Heart left ventricle (tissue), 16 donors: ENCODE measurements at regions of chr1 and their contacts with region 1.

Region 1: DNA sequence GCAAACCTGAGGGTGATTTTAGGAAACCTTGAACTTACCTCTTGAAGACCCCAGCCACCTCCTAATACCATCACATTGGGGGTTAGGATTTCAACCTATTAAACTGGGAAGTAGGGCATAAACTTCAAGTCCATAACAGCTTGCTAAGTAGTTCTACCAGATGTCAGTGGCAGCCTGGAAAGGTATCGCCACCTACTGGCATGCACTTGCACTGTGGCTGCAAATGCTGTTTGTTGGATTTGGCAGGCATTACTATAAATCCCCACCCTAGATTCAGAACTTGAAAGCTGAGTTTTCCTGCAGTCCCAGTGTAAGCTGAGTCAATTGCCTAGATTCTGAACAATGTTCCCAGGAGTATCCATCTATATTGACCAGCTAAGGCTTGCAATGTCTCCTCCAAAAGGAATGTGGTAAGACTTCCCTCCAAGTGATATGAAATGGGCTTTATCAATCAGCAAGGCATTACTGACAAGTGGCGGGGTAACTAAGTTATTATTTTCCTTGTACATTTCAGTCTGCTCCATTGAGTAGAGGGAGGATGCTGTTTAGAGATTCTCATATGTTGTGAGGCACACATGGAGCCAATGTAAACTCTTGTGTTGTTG is 474.5 kb downstream of the PTPRC start:
- DNase-seq: peak in 4 of 5 donors; percentile 21 to 75 (median 30)
- ATAC-seq: no peak
- H3K4me3 ChIP-seq: no peak overlapping the region
- H3K27ac ChIP-seq: no peak overlapping the region
- H3K4me1 ChIP-seq: no peaks in the 10 kb centered on the region
- H3K27me3 ChIP-seq: no peaks in the 10 kb centered on the region
- CTCF ChIP-seq: peak; percentile 55 to 80 (median 60)
- POLR2A ChIP-seq: no peak

Region 2: GRCh38 chr1:198763298-198763714 is 350.1 kb before region 1 on chr1:
- intact Hi-C with region 1: loop called in 5 of 10 experiments (anchors 5 to 10 kb)
- DNase-seq: no peak
- ATAC-seq: peak in 1 of 4 donors; percentile 18
- H3K4me3 ChIP-seq: no peak overlapping the region
- H3K27ac ChIP-seq: no peak overlapping the region
- H3K4me1 ChIP-seq: peaks cover 0 to 6% (median 0%) of the 10 kb centered on the region in 12 donors
- H3K27me3 ChIP-seq: no peaks in the 10 kb centered on the region
- CTCF ChIP-seq: no peak
- POLR2A ChIP-seq: no peak

Region 3: GRCh38 chr1:198771563-198772153 is 341.7 kb before region 1 on chr1:
- intact Hi-C with region 1: loop called in 5 of 10 experiments (anchors 2 to 10 kb)
- DNase-seq: no peak
- ATAC-seq: no peak
- H3K4me3 ChIP-seq: no peak overlapping the region
- H3K27ac ChIP-seq: no peak overlapping the region
- H3K4me1 ChIP-seq: peaks cover 0 to 22% (median 0%) of the 10 kb centered on the region in 12 donors
- H3K27me3 ChIP-seq: no peaks in the 10 kb centered on the region
- CTCF ChIP-seq: peak; percentile 16 to 53 (median 43)
- POLR2A ChIP-seq: no peak

Region 4: GRCh38 chr1:199009447-199009846 is 103.9 kb before region 1 on chr1:
- intact Hi-C with region 1: no loop called
- DNase-seq: no peak
- ATAC-seq: peak in 3 of 4 donors; percentile 49 to 59 (median 56)
- H3K4me3 ChIP-seq: peak overlapping the region in 1 of 12 donors; percentile 11
- H3K27ac ChIP-seq: peak overlapping the region in 2 of 12 donors; percentile 26 to 32
- H3K4me1 ChIP-seq: peaks cover 0 to 23% (median 11%) of the 10 kb centered on the region in 12 donors
- H3K27me3 ChIP-seq: no peaks in the 10 kb centered on the region
- CTCF ChIP-seq: no peak
- POLR2A ChIP-seq: no peak